Cardiac septum (tissue), 1 donor: ENCODE measurements at regions of chr9 and their contacts with region 1.

Region 1: DNA sequence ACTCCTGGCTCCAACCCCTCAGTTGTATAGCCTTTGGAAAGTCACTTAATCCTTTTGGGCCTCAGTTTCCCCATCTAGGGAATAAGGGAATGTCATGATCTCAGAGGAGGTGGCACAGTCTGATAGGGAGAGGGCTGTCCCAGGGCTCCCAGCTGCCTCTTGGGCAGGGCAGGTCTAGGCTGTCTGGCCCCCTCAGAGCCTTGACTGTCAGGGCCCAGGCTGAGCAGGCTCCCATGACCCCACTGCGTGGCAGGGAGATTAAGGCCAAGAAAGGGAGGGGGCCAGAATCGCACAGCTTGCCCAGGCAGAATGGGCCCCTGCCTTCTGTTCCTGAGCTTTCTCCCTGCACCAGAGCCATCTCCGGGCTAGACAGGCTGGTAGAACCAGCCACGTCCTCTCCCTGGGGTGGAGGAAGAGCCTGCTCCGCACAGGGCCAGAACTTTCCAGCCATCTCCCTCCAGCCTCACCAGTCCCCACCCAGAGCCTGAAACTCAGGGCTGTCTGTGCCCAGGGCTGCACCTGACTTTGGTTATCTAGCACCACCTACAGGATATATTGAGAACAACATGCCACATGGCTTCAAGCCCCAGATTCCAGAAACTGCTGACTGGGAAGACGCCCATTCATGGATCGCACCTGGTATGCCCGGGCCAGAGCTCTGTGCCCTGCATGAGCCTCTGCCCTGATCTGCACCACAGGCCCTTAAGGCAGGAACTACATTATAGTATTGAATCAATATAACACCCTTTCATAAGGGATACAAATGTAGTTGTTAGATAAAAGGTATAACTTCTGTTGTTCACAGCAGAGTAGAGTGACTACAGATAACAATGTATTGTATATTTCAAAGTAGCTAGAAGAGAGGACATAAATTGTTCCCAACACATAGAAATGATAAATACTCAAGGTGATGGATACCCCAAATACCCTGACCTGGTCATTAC is 32.0 kb downstream of the NAIF1 start:
- DNase-seq: peak; percentile 80

Region 2: DNA sequence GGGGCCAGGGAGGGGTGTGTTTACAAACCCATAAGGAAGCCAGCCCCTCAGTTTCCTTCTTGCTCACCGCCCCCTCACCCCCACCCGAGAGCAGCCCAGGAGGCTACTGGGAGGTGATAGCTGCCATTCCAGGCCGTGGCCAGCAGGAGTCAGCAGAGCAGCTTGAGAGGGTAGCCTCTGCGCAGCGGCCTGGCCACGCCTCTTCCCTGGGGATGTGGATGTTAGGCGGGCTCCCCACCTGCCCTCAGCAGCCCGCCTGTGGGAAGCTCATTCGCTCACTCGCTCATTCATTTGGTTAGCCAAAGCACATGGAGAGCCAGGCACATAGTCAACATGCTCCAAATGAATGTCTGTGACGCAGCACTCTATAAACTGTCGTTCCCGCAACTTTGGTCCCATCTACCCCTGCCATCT is 91.4 kb before region 1 on chr9:
- intact Hi-C with region 1: loop called (anchors 1 kb)
- DNase-seq: peak; percentile 93

Region 3: GRCh38 chr9:128011071-128011817 is 23.8 kb before region 1 on chr9:
- intact Hi-C with region 1: no loop called
- DNase-seq: peak; percentile 78